Heart left ventricle (tissue), 16 donors: ENCODE measurements at regions of chr10 and their contacts with region 1.

Region 1: GRCh38 chr10:9362721-9363120 is 1308.2 kb downstream of the GATA3 start:
- DNase-seq: no peak
- ATAC-seq: no peak
- H3K4me3 ChIP-seq: no peak overlapping the region
- H3K27ac ChIP-seq: no peak overlapping the region
- H3K4me1 ChIP-seq: no peaks in the 10 kb centered on the region
- H3K27me3 ChIP-seq: no peaks in the 10 kb centered on the region
- CTCF ChIP-seq: no peak
- POLR2A ChIP-seq: no peak

Region 2: GRCh38 chr10:9253108-9253507 is 109.6 kb before region 1 on chr10:
- intact Hi-C with region 1: no loop called
- DNase-seq: no peak
- ATAC-seq: no peak
- H3K4me3 ChIP-seq: no peak overlapping the region
- H3K27ac ChIP-seq: no peak overlapping the region
- H3K4me1 ChIP-seq: no peaks in the 10 kb centered on the region
- H3K27me3 ChIP-seq: peaks cover 0 to 6% (median 0%) of the 10 kb centered on the region in 9 donors
- CTCF ChIP-seq: no peak
- POLR2A ChIP-seq: no peak

Region 3: GRCh38 chr10:9449530-9449929 is 86.8 kb after region 1 on chr10:
- intact Hi-C with region 1: loop called in 1 of 10 experiments (anchors 10 kb)
- DNase-seq: no peak
- ATAC-seq: no peak
- H3K4me3 ChIP-seq: no peak overlapping the region
- H3K27ac ChIP-seq: no peak overlapping the region
- H3K4me1 ChIP-seq: no peaks in the 10 kb centered on the region
- H3K27me3 ChIP-seq: no peaks in the 10 kb centered on the region
- CTCF ChIP-seq: no peak
- POLR2A ChIP-seq: no peak